ENCODE measurements at regions of chr1 and their contacts with region 1.

Region 1: GRCh38 chr1:173824331-173825081 is at the starts of genes CENPL and DARS2:
- DNase-seq: peak; percentile 94
- ATAC-seq: peak; percentile 87
- H3K4me3 ChIP-seq: peak within 1 kb of the TSS; percentile 92
- H3K27ac ChIP-seq: peak within 1 kb of the TSS; percentile 91
- H3K4me1 ChIP-seq: no peaks in the 10 kb centered on the region; the same call in 1 of the 2 replicates
- H3K27me3 ChIP-seq: no peaks in the 10 kb centered on the region
- CTCF ChIP-seq: no peak
- EP300 ChIP-seq: no peak; a peak in 1 of 4 replicates
- POLR2A ChIP-seq: peak; percentile 83
- RAD21 ChIP-seq: no peak
- polyA plus RNA-seq, gene CENPL: 14.9 to 26.7 TPM
- polyA plus RNA-seq, gene DARS2: 23.9 to 25.2 TPM

Region 2: GRCh38 chr1:173476664-173477285 is 347.7 kb before region 1 on chr1:
- CTCF ChIA-PET with region 1: interaction called, 5 read pairs
- POLR2A ChIA-PET with region 1: interaction called, 3 read pairs
- RAD21 ChIA-PET with region 1: no interaction called
- SMC1A ChIA-PET with region 1: interaction called, 3 read pairs
- in situ Hi-C with region 1: no loop called
- intact Hi-C with region 1: loop called (anchors 1 kb)
- DNase-seq: peak; percentile 61
- ATAC-seq: peak; percentile 94
- H3K4me3 ChIP-seq: peak overlapping the region; percentile 78
- H3K27ac ChIP-seq: peak overlapping the region; percentile 86
- H3K4me1 ChIP-seq: peaks cover 8% of the 10 kb centered on the region
- H3K27me3 ChIP-seq: no peaks in the 10 kb centered on the region
- CTCF ChIP-seq: peak in 1 of 3 experiments; percentile 26; a peak in 1 of 6 replicates
- EP300 ChIP-seq: no peak
- POLR2A ChIP-seq: peak; percentile 86
- RAD21 ChIP-seq: no peak

Region 3: GRCh38 chr1:173714759-173715537 is 109.6 kb before region 1 on chr1 and contains the start of gene KLHL20:
- CTCF ChIA-PET with region 1: interaction called, 3 read pairs
- POLR2A ChIA-PET with region 1: interaction called, 4 read pairs
- RAD21 ChIA-PET with region 1: interaction called, 7 read pairs
- SMC1A ChIA-PET with region 1: interaction called, 4 read pairs
- in situ Hi-C with region 1: no loop called
- intact Hi-C with region 1: loop called (anchors 2 kb)
- DNase-seq: peak; percentile 73
- ATAC-seq: peak; percentile 98
- H3K4me3 ChIP-seq: peak within 1 kb of the TSS; percentile 92
- H3K27ac ChIP-seq: peak within 1 kb of the TSS; percentile 71
- H3K4me1 ChIP-seq: peaks cover 3% of the 10 kb centered on the region; the same call in 1 of the 2 replicates
- H3K27me3 ChIP-seq: no peaks in the 10 kb centered on the region
- CTCF ChIP-seq: no peak; a peak in 1 of 6 replicates
- EP300 ChIP-seq: no peak; a peak in 1 of 4 replicates
- POLR2A ChIP-seq: peak; percentile 90
- RAD21 ChIP-seq: 0 out of 2 replicates have a peak, but pooled peaks have one; percentile 10
- polyA plus RNA-seq, gene KLHL20: 3.8 to 5.8 TPM

Region 4: DNA sequence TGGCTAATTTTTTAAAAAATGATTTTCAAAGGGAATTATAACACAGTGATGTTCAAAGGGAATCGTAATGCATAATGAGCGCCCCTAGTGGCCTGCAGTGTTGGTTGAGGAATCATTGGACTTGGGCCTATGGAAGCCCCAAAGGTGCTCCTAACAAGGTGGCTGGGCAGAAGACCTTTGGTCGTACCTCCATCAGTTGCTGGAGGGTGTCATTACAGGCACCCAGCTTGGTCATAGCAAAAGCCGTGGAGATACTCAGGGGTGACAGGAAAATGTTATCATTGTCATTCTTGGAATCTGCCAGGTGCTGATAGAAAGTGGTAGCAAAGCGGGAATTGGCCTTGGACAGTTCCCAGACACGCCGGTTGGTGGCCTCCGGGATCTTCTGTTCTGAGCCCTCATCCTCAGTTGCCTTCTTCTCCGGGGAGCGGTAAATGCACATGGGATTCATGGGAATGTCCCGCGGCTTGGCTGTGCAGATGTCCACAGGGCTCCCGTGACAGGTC is 89.9 kb after region 1 on chr1:
- CTCF ChIA-PET with region 1: no interaction called
- POLR2A ChIA-PET with region 1: no interaction called
- RAD21 ChIA-PET with region 1: no interaction called
- SMC1A ChIA-PET with region 1: no interaction called
- in situ Hi-C with region 1: no loop called
- intact Hi-C with region 1: no loop called
- DNase-seq: no peak
- ATAC-seq: peak; percentile 92
- H3K4me3 ChIP-seq: no peak overlapping the region
- H3K27ac ChIP-seq: no peak overlapping the region
- H3K4me1 ChIP-seq: no peaks in the 10 kb centered on the region
- H3K27me3 ChIP-seq: peaks cover 0 to 1% of the 10 kb centered on the region in 2 experiments; a peak in 1 of 4 replicates
- CTCF ChIP-seq: peak; percentile 54 to 84 (median 75)
- EP300 ChIP-seq: no peak
- POLR2A ChIP-seq: no peak
- RAD21 ChIP-seq: peak; percentile 55; the same call in 1 of the 2 replicates

Measured in GM12878 (cell line).